OCI-LY7 (cell line): ENCODE measurements at regions of chr6 and their contacts with region 1.

Region 1: DNA sequence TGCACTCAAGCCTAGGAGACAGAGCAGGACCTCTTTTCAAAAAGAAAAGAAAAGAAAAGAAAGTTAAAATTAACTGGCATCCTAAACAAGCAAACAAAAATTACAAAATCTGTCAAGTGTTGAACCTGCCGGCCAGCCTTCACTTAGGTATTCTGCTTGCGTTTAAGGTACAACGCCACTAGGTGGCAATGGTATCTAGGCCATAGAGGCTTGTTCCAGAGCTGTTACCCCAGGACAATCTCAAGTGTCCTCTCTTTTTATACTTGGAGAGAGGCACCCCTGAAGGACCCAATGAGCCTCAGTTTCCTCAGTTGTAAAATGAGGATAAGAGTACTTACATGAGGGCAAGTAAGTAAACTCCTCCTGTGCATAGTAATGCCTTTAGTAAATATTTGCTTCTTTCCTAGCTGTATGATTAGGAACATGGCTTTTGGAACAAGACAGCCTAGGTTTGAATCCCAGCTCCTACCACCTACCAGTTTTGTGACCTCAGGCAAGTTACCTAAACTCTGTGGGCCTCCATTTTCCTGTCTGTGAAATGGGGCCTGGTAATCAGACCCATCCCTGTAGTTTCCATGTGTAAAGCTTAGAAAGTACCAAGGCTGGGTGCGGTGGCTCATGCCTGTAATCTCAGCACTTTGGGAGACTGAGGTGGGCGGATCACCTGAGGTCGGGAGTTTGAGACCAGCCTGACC is 5.8 kb upstream of the PACSIN1 start:
- DNase-seq: peak; percentile 81
- H3K4me3 ChIP-seq: no peak overlapping the region
- H3K27ac ChIP-seq: no peak overlapping the region
- H3K4me1 ChIP-seq: peaks cover 30% of the 10 kb centered on the region
- CTCF ChIP-seq: peak; percentile 96

Region 2: DNA sequence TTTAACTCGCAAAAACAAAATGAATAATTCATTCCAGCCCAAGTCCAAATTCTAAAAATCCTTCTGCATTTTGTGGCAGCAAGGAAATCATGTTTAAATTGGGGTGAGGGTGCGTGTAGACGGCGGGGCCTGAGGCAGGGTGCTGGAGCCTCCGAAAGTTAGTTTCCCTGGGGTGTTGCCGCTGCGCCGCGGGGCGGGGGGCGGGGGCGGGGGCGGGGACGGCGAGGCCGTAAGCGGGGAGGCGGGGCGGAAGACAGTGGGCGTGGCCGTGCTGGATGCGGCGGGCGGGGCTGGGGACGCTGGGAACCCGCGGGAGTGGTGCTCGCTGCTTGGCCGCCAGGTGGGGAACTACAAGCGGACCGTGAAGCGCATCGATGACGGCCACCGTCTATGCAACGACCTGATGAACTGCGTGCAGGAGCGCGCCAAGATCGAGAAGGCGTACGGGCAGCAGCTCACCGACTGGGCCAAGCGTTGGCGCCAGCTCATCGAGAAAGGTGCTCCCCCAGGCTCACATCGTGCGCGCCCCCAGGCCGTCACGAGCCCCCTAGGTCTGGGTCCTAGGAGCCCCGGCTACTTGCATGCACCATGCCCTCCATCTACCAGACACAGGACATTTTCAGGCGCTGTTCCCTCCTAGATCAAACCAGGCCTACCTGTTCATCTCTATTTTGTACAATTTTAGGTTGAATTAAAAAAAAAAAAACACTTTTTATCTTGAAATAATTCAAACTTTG is 67.1 kb after region 1 on chr6:
- CTCF ChIA-PET with region 1: no interaction called
- POLR2A ChIA-PET with region 1: no interaction called
- intact Hi-C with region 1: loop called (anchors 2 kb)
- DNase-seq: peak; percentile 91
- H3K4me3 ChIP-seq: peak overlapping the region; percentile 38
- H3K27ac ChIP-seq: no peak overlapping the region
- H3K4me1 ChIP-seq: peaks cover 15% of the 10 kb centered on the region
- CTCF ChIP-seq: peak; percentile 71

Region 3: GRCh38 chr6:34560366-34561226 is 100.5 kb after region 1 on chr6:
- CTCF ChIA-PET with region 1: no interaction called
- POLR2A ChIA-PET with region 1: no interaction called
- intact Hi-C with region 1: loop called (anchors 2 kb)
- DNase-seq: no peak
- H3K4me3 ChIP-seq: no peak overlapping the region
- H3K27ac ChIP-seq: no peak overlapping the region
- H3K4me1 ChIP-seq: no peaks in the 10 kb centered on the region
- CTCF ChIP-seq: peak; percentile 36; the same call in 1 of the 2 replicates

Region 4: DNA sequence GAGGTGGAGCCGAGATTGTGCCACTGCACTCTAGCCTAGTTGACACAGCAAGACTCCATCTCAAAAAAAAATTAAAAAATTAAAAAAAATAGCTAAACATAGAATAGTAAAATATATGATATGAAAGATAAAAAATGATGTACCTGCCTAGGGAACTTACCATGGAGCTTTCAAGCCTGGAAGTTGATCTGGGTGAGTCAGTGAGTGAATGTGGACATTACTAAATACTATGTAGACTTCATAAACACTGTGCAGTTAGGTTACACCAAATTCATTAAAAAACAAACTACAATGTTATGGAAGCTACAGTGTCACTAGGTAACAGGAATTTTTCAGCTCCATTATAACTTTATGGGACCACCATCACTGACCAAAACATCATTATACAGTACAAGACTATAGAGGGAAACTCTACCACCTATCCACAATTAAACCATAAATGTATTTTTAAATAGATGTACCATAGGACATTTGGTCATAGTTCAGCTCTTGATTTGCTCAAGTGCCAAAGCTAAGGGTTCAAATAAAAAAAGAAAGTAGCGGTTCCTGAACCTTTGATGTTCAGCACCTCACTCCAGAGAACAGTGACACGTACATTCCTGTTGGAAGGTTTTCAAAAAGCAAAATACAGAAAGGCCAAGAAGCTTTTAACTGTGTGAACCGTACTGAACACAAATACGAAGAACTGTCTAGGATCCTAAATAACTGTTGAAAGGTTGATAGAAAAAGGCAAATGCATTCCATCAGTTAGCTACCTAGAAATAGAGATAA is 148.5 kb after region 1 on chr6:
- CTCF ChIA-PET with region 1: interaction called, 8 read pairs
- POLR2A ChIA-PET with region 1: interaction called, 6 read pairs
- intact Hi-C with region 1: loop called (anchors 1 kb)
- DNase-seq: no peak
- H3K4me3 ChIP-seq: no peak overlapping the region
- H3K27ac ChIP-seq: no peak overlapping the region
- H3K4me1 ChIP-seq: no peaks in the 10 kb centered on the region
- CTCF ChIP-seq: no peak

Region 5: DNA sequence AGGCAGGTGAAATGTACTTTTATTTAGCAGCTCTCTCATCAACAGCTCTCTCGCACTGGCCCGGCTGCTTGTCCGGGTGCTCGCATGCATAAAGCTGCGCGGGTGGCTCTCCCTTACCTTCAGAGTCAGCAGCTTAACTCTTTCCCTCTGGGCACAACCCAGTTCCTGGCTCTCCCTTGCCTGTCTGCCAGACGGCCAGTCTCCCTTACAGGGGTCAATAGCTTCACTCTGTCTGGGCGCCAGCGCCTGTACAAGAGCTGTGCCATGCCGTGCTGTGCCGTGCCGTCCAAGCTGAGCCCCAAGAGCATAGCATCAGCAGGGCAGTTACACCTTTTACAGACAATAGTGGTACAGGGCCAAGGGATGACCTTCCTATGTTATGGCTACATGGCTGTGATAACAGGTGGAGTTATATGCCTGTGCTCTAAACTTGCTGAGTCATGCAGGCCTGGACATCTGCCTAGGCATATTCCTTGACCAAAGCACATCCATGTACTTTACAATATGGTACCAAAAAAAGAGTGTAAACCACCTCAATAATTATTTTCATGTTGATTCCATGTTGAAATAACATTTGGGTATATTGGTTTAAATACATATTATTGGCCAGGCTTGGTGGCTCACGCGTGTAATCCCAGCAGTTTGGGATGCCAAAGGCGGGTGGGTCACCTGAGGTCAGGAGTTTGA is 379.8 kb after region 1 on chr6:
- CTCF ChIA-PET with region 1: no interaction called
- POLR2A ChIA-PET with region 1: no interaction called
- intact Hi-C with region 1: no loop called
- DNase-seq: no peak
- H3K4me3 ChIP-seq: no peak overlapping the region
- H3K27ac ChIP-seq: no peak overlapping the region
- H3K4me1 ChIP-seq: no peaks in the 10 kb centered on the region
- CTCF ChIP-seq: no peak

Region 6: DNA sequence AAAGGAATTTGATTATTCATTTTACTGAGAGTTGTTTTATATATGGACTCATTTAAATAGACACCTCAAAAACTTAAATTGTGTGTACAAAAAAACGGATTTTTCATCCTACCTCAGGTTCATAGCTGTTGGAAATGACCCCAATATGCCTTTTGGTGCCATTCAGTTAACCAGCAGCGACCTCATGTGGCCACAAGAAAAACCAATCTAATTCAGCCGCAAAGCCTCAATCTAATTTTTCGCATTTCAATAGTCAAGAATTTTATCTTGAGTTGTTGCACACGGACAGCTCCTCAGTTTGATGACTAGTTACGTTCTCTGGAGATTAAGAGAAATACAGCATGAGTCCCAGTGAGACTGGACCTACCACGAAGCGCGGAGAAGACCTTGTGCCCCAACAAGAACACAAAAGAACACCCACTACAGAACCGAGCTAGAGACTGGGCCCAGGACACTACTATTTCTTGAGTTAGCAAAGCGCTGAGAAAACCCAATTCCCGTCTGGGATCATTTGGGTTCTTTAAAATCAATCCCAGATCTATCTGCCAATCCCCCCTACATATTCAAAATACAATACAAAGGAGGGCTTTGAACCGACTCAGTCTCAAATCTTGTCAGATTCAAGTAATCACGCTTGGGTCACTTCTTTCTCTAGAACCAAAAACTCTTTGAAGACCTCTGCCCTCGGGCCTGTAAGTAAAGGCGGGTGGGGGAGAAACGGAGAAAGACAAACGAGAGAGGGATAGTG is 680.0 kb after region 1 on chr6:
- CTCF ChIA-PET with region 1: no interaction called
- POLR2A ChIA-PET with region 1: no interaction called
- intact Hi-C with region 1: loop called (anchors 1 kb)
- DNase-seq: peak; percentile 79
- H3K4me3 ChIP-seq: no peak overlapping the region
- H3K27ac ChIP-seq: no peak overlapping the region
- H3K4me1 ChIP-seq: peaks cover 12% of the 10 kb centered on the region
- CTCF ChIP-seq: peak; percentile 97